ENCODE measurements at regions of chr10 and their contacts with region 1.

Region 1: DNA sequence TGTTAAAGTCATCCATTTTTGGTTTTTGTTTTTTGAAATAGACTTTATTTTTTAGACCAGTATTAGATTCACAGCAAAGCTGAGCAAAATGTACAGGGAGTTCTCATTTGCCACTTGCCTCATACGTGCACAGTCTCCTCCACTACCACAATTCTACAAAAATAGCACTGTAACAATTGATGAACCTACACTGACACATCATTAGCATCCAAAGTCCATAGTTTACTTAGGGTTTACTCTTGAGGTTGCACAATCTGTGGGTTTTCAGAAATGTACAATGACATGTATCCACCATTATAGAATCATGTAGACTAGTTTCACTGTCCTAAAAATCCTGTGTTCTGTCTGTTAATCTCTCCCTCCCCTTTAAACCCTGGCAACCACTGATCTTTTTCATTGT is 125.8 kb upstream of the PDSS1 start:
- DNase-seq: no peak
- H3K4me3 ChIP-seq: no peak overlapping the region
- H3K4me3 Mint-ChIP-seq: no peak overlapping the region
- H3K27ac Mint-ChIP-seq: no peak overlapping the region
- H3K4me1 ChIP-seq: no peaks in the 10 kb centered on the region
- H3K4me1 Mint-ChIP-seq: peaks cover 18% of the 10 kb centered on the region
- H3K27me3 ChIP-seq: no peaks in the 10 kb centered on the region
- H3K27me3 Mint-ChIP-seq: peaks cover 21% of the 10 kb centered on the region
- CTCF ChIP-seq: no peak

Region 2: GRCh38 chr10:26550774-26551526 is 20.7 kb before region 1 on chr10:
- CTCF ChIA-PET with region 1: no interaction called
- POLR2A ChIA-PET with region 1: no interaction called
- intact Hi-C with region 1: no loop called
- DNase-seq: no peak
- H3K4me3 ChIP-seq: no peak overlapping the region
- H3K4me3 Mint-ChIP-seq: no peak overlapping the region
- H3K27ac Mint-ChIP-seq: no peak overlapping the region
- H3K4me1 ChIP-seq: peaks cover 7% of the 10 kb centered on the region
- H3K4me1 Mint-ChIP-seq: peaks cover 10% of the 10 kb centered on the region
- H3K27me3 ChIP-seq: no peaks in the 10 kb centered on the region
- H3K27me3 Mint-ChIP-seq: no peaks in the 10 kb centered on the region
- CTCF ChIP-seq: peak; percentile 14 to 18

Region 3: DNA sequence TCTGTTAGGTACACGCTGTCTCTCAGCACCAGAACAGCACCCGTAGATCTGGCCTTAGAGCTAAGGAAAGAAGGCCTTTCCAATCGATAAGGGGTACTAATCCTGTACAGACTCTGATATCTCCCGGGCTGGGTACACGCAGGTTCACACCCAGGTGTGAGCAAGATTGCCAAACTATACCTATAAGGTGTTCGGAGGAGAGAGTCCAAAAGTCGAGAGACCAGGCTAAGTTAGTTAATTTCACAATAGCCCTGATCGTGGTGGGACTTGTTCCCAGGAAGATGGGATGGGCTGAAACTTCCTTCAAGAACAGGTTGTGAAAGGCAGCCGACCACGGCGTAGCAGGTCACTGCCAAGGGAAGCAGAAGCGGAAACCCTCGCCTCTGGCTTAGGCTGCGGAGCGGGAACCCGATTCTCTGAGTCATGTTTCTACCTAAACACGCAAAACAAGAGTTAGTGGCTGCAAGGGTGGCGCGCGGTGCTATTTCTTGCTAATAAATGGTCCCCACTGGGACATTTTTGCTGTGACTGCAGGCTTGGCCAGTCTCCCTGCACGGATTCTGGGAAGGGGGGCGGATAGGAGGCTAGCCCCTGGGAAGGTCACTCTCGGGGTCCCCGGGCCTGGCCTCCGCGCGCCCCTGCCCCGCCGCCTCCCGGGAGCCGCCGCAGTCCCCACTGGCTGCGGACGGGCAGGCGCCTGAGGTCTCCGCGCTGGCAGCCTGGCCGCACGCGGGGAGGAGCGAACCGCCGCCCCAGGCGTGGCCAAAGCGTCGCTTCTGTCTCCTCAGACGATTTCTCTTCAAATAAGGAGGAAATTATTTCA is 50.4 kb after region 1 on chr10:
- CTCF ChIA-PET with region 1: no interaction called
- POLR2A ChIA-PET with region 1: no interaction called
- intact Hi-C with region 1: loop called (anchors 1 kb)
- DNase-seq: peak; percentile 46 to 64
- H3K4me3 ChIP-seq: peak overlapping the region; percentile 64
- H3K4me3 Mint-ChIP-seq: peak overlapping the region; percentile 78
- H3K27ac Mint-ChIP-seq: no peak overlapping the region
- H3K4me1 ChIP-seq: peaks cover 6% of the 10 kb centered on the region; the same call in 1 of the 2 replicates
- H3K4me1 Mint-ChIP-seq: peaks cover 7% of the 10 kb centered on the region
- H3K27me3 ChIP-seq: peaks cover 2% of the 10 kb centered on the region; the same call in 1 of the 2 replicates
- H3K27me3 Mint-ChIP-seq: peaks cover 25% of the 10 kb centered on the region
- CTCF ChIP-seq: no peak